Activated CD4-positive, alpha-beta T cell treated with anti-CD3 and anti-CD28 coated beads for 36 hours (primary cell): ENCODE measurements at regions of chr11 and their contacts with region 1.

Region 1: DNA sequence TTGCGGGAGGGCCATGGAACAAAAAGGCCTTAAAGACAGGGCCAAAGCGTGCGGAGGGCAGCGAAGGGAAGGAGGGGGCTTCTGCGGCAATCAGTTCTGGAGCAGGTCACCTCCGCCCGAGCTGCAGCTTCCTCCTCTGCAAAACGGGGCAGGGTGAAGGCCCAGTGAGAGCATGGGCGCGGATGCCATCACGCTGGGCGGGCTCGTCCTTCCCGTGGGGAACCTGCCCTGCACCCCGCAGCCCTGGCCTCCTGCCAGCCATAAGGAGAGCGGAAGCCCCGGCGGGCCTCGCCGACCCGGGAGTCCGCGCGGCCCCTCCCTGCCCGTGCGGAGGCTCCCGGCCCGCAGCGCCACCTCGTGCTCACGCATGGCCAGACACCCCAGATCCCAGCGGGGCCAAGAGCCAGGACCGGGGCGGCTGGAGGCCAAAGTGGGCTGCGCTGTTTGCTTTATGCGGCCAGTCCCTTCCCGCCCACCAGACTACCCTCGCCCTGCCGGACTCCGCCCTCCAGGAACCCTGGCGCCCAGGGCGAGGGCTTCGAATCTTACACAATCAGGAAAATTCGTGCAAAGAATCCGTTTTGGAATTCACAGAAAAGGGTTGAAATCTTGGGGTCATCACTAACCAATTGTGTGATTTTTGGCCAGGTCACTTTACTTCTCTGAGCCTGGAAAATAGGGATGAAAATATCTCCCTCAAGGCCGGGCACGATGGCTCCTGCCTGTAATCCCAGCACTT is 16.1 kb downstream of the TSKU start:
- DNase-seq: peak; percentile 87
- ATAC-seq: peak; percentile 81
- H3K4me3 Mint-ChIP-seq: peak overlapping the region; percentile 33
- H3K27ac Mint-ChIP-seq: no peak overlapping the region
- H3K4me1 Mint-ChIP-seq: peaks cover 19% of the 10 kb centered on the region
- H3K27me3 Mint-ChIP-seq: peaks cover 2% of the 10 kb centered on the region

Region 2: DNA sequence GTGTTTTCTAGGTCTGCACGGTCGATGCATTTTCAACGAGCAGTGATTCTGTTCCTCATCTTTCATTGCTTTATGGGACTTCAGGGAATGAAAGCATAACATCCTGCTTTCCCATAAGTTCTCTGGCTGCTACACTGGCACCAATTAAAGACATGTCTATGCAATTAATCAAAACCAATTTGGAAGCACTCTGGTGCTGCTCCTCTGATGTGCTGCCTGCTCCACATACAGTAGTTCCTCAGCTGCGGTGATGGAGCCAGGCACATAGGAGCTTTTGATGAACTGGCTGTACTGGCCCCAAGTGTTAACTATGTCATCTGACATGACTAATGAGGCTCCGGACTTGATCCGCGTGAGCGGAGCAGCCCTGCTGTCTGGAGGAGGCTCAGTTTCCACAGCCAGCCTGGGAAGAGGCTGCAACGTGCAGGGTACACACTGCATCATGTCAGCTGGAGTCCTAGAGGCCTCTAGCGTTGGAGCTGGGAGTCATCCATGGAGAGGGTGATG is 388.3 kb before region 1 on chr11:
- CTCF ChIA-PET with region 1: no interaction called
- POLR2A ChIA-PET with region 1: no interaction called
- intact Hi-C with region 1: no loop called
- DNase-seq: no peak
- ATAC-seq: no peak
- H3K4me3 Mint-ChIP-seq: no peak overlapping the region
- H3K27ac Mint-ChIP-seq: no peak overlapping the region
- H3K4me1 Mint-ChIP-seq: no peaks in the 10 kb centered on the region
- H3K27me3 Mint-ChIP-seq: peaks cover 5% of the 10 kb centered on the region

Region 3: DNA sequence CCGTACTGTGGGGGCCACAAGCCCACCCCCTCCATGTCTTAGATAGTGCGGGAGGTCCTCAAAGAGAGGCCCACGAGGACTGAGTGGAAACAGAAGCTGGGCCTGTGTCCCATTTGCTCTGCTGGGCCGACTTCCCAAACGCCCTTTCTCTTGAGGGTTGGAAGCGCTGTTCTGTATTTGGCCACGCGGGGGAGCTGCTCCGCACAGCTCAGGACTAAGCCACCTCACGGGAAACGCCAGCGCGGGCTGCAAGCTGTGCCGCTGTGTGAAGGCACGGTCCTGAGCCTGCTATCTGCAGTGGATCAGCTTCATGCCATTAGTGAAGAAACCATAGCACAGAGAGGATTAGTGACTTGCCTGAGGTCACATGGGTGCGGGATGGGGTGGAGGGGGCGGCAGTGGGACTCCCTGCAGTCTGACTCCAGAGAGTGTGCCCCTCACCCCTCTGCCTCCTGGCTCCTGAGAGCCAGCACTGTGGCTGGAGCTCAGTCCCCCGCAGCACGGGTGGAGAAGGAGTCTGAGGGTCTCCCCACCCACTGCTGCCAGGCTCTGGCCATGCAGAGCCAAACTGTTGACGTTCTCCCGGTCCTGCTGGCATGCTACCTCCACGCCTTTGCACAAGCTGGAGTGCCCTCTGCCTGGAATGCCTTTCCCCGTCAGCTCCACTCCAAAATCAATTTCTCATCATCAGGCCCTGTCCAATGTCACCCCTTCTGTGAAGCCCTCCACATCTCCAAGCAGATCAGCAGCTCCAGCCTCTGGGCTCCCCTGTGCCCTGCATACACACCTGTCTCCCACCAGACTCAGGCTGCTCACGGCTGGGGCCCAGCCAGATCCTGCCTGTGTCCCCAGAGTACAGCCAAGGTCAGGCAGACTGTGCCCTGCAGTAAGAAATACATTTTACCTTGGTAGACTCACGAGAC is 77.2 kb before region 1 on chr11:
- CTCF ChIA-PET with region 1: interaction called, 8 read pairs
- POLR2A ChIA-PET with region 1: no interaction called
- intact Hi-C with region 1: loop called in 1 of 2 experiments (anchors 1 kb)
- DNase-seq: peak; percentile 88
- ATAC-seq: peak; percentile 99
- H3K4me3 Mint-ChIP-seq: no peak overlapping the region
- H3K27ac Mint-ChIP-seq: no peak overlapping the region
- H3K4me1 Mint-ChIP-seq: peaks cover 6% of the 10 kb centered on the region
- H3K27me3 Mint-ChIP-seq: peaks cover 16% of the 10 kb centered on the region

Region 4: GRCh38 chr11:76734456-76735420 is 64.5 kb before region 1 on chr11:
- CTCF ChIA-PET with region 1: interaction called, 32 read pairs
- POLR2A ChIA-PET with region 1: no interaction called
- intact Hi-C with region 1: loop called (anchors 1 kb)
- DNase-seq: no peak
- ATAC-seq: no peak
- H3K4me3 Mint-ChIP-seq: no peak overlapping the region
- H3K27ac Mint-ChIP-seq: no peak overlapping the region
- H3K4me1 Mint-ChIP-seq: no peaks in the 10 kb centered on the region
- H3K27me3 Mint-ChIP-seq: no peaks in the 10 kb centered on the region

Region 5: GRCh38 chr11:76782526-76783293 is 16.5 kb before region 1 on chr11:
- CTCF ChIA-PET with region 1: interaction called, 8 read pairs
- POLR2A ChIA-PET with region 1: interaction called, 3 read pairs
- intact Hi-C with region 1: loop called (anchors 1 to 2 kb)
- DNase-seq: peak; percentile 91
- ATAC-seq: peak; percentile 89
- H3K4me3 Mint-ChIP-seq: peak overlapping the region; percentile 69
- H3K27ac Mint-ChIP-seq: peak overlapping the region; percentile 96
- H3K4me1 Mint-ChIP-seq: peaks cover 15% of the 10 kb centered on the region
- H3K27me3 Mint-ChIP-seq: peaks cover 41% of the 10 kb centered on the region